ENCODE measurements at regions of chr13 and their contacts with region 1.

Region 1: GRCh38 chr13:47337781-47338507 is 441.1 kb upstream of the HTR2A start:
- DNase-seq: no peak
- H3K4me3 ChIP-seq: no peak overlapping the region
- H3K27ac ChIP-seq: no peak overlapping the region
- H3K4me1 ChIP-seq: peaks cover 0 to 11% (median 0%) of the 10 kb centered on the region in 4 donors
- H3K27me3 ChIP-seq: no peaks in the 10 kb centered on the region
- CTCF ChIP-seq: no peak
- EP300 ChIP-seq: no peak
- POLR2A ChIP-seq: no peak

Region 2: GRCh38 chr13:47237571-47237970 is 100.4 kb before region 1 on chr13:
- intact Hi-C with region 1: loop called (anchors 5 kb)
- DNase-seq: no peak
- H3K4me3 ChIP-seq: no peak overlapping the region
- H3K27ac ChIP-seq: no peak overlapping the region
- H3K4me1 ChIP-seq: no peaks in the 10 kb centered on the region
- H3K27me3 ChIP-seq: no peaks in the 10 kb centered on the region
- CTCF ChIP-seq: no peak
- EP300 ChIP-seq: no peak
- POLR2A ChIP-seq: no peak

Region 3: DNA sequence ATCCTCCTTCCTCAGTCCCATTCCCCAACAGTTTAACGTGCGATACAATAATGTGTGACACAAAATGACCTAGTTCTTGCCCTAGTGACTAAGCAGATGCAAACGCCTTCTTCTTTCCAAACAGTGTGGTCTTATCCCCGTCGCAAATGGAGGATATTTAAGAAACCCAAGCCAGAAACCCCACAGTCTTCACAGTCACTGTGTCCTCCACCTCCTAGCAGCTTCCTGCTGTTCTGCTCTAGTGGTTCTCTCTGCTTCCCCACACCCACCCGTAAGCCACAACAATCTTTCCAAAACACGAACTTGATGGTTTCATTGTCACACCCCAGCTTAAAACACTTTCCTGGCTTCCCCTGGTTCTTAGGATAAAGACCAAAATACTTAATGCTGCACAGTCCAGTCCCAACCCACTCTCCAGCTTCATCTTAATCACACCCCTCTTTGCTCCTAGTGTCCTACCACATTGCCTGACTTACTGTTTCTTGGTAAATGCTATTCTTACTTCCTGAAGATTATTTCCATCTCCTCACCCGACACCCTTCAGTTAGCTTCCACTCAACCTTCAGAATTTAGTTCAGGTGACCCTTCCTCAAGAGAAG is 927.4 kb after region 1 on chr13:
- intact Hi-C with region 1: no loop called
- DNase-seq: peak in 1 of 2 donors; percentile 13
- H3K4me3 ChIP-seq: no peak overlapping the region
- H3K27ac ChIP-seq: no peak overlapping the region
- H3K4me1 ChIP-seq: peaks cover 0 to 10% (median 0%) of the 10 kb centered on the region in 4 donors
- H3K27me3 ChIP-seq: no peaks in the 10 kb centered on the region
- CTCF ChIP-seq: no peak
- EP300 ChIP-seq: no peak
- POLR2A ChIP-seq: no peak

Region 4: DNA sequence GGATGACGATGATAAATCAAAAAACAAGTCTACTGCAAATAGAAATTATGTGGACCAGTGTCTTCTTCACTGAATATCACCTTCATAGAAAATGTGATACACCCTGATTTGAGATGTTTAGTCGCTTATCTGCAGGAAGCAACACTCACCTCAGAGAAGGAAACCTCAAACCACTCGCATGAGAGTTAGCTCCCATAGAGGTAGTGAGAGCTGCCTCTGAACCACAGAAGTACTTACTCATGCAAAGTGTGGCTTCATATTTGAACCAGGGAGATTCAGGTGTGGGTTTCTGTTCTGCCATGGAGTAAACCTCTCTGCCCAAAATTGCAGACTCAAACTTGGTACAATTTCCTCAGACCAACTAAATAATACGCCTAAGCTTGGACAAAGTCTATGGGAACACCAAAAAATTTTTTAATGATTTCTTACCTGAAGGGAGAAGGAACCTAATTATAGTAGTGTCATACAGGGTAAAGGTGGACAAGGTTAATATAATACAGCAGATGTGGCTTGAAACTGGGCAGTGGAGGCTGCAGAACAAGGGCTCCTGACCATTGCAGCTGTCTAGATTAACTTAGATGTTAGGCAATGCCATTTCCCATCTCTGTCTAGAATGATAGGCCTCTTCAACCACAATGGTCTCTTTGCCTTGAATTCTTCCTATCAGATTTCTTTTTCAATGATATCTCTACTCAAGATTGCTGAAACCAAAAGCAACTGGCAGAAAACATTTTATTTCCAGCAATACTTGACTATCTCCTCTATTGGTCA is 1224.5 kb after region 1 on chr13:
- intact Hi-C with region 1: no loop called
- DNase-seq: peak in 1 of 2 donors; percentile 66
- H3K4me3 ChIP-seq: no peak overlapping the region
- H3K27ac ChIP-seq: peak overlapping the region in 2 of 5 donors; percentile 1 to 57
- H3K4me1 ChIP-seq: peaks cover 3 to 28% (median 9%) of the 10 kb centered on the region in 4 donors
- H3K27me3 ChIP-seq: no peaks in the 10 kb centered on the region
- CTCF ChIP-seq: no peak
- EP300 ChIP-seq: no peak
- POLR2A ChIP-seq: no peak

Measured in stomach (tissue), 19 donors.